ENCODE measurements at regions of chr9 and their contacts with region 1.

Region 1: GRCh38 chr9:122879443-122879842 is 25.7 kb downstream of the RC3H2 start:
- DNase-seq: no peak
- CTCF ChIP-seq: no peak

Region 2: GRCh38 chr9:122900791-122901190 is 21.3 kb after region 1 on chr9:
- CTCF ChIA-PET with region 1: interaction called, 10 read pairs
- POLR2A ChIA-PET with region 1: no interaction called
- DNase-seq: peak; percentile 32
- CTCF ChIP-seq: no peak

Region 3: GRCh38 chr9:123187131-123187530 is 307.7 kb after region 1 on chr9:
- CTCF ChIA-PET with region 1: no interaction called
- POLR2A ChIA-PET with region 1: no interaction called
- DNase-seq: no peak
- CTCF ChIP-seq: no peak